Endothelial cell of umbilical vein (primary cell): ENCODE measurements at regions of chr5 and their contacts with region 1.

Region 1: GRCh38 chr5:123856766-123857165 is 344.8 kb downstream of the CSNK1G3 start:
- DNase-seq: no peak
- H3K4me3 ChIP-seq: no peak overlapping the region
- H3K27ac ChIP-seq: no peak overlapping the region
- H3K4me1 ChIP-seq: no peaks in the 10 kb centered on the region
- H3K27me3 ChIP-seq: peaks cover 0 to 4% of the 10 kb centered on the region in 2 experiments
- CTCF ChIP-seq: no peak
- POLR2A ChIP-seq: no peak

Region 2: GRCh38 chr5:123720955-123721354 is 135.8 kb before region 1 on chr5:
- CTCF ChIA-PET with region 1: no interaction called
- POLR2A ChIA-PET with region 1: no interaction called
- dilution Hi-C with region 1: no loop called
- intact Hi-C with region 1: loop called (anchors 1 kb)
- DNase-seq: no peak
- H3K4me3 ChIP-seq: no peak overlapping the region
- H3K27ac ChIP-seq: no peak overlapping the region
- H3K4me1 ChIP-seq: peaks cover 17% of the 10 kb centered on the region
- H3K27me3 ChIP-seq: no peaks in the 10 kb centered on the region
- CTCF ChIP-seq: no peak
- POLR2A ChIP-seq: no peak